Transverse colon (tissue), 4 donors: ENCODE measurements at regions of chrX and their contacts with region 1.

Region 1: GRCh38 chrX:131710431-131711045 is 166.7 kb downstream of the OR13H1 start:
- DNase-seq: no peak
- H3K4me3 ChIP-seq: no peak overlapping the region
- H3K27ac ChIP-seq: peak overlapping the region in 1 of 4 donors; percentile 55
- H3K4me1 ChIP-seq: no peaks in the 10 kb centered on the region
- H3K27me3 ChIP-seq: no peaks in the 10 kb centered on the region
- CTCF ChIP-seq: no peak
- EP300 ChIP-seq: no peak
- POLR2A ChIP-seq: no peak

Region 2: GRCh38 chrX:131728295-131729145 is 18.0 kb after region 1 on chrX:
- in situ Hi-C with region 1: no loop called
- intact Hi-C with region 1: loop called (anchors 2 kb)
- DNase-seq: peak; percentile 85
- H3K4me3 ChIP-seq: peak overlapping the region in 2 of 4 donors; percentile 30 to 36
- H3K27ac ChIP-seq: peak overlapping the region in 2 of 4 donors; percentile 76 to 89
- H3K4me1 ChIP-seq: no peaks in the 10 kb centered on the region
- H3K27me3 ChIP-seq: no peaks in the 10 kb centered on the region
- CTCF ChIP-seq: peak in 1 of 5 experiments; percentile 35
- EP300 ChIP-seq: no peak
- POLR2A ChIP-seq: no peak